CD4-positive, alpha-beta memory T cell (primary cell): ENCODE measurements at regions of chr1 and their contacts with region 1.

Region 1: GRCh38 chr1:26417111-26417759 is 6.6 kb downstream of the LIN28A start:
- DNase-seq: peak; percentile 76 to 81 (median 78)
- H3K4me3 ChIP-seq: no peak overlapping the region
- H3K4me3 Mint-ChIP-seq: no peak overlapping the region
- H3K27ac ChIP-seq: no peak overlapping the region
- H3K27ac Mint-ChIP-seq: no peak overlapping the region
- H3K4me1 ChIP-seq: no peaks in the 10 kb centered on the region
- H3K4me1 Mint-ChIP-seq: peaks cover 0 to 3% (median 0%) of the 10 kb centered on the region in 4 donors
- H3K27me3 ChIP-seq: peaks cover 19% of the 10 kb centered on the region
- H3K27me3 Mint-ChIP-seq: peaks cover 12 to 23% of the 10 kb centered on the region in 2 donors

Region 2: DNA sequence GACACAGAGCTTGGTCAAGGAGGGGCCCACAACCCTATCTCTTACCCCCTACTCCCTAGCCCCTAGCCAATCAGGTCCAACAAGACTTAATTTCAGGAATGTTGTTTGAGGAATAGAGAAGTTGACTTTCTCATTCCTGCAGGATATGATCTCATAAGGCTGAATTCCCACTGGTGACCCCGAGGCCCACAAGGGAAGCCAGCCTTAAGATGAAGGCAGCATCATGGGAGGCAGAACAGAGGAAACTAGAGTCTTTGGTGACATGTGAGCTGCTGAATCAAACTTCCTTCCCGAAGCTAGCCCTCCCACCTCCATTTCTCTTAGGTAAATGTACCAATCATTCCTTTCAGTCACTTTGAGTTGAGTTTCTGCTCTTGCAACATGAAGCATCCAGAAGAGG is 314.7 kb before region 1 on chr1:
- CTCF ChIA-PET with region 1: interaction called, 8 read pairs
- POLR2A ChIA-PET with region 1: no interaction called
- intact Hi-C with region 1: loop called (anchors 2 kb)
- DNase-seq: no peak
- H3K4me3 ChIP-seq: no peak overlapping the region
- H3K4me3 Mint-ChIP-seq: no peak overlapping the region
- H3K27ac ChIP-seq: no peak overlapping the region
- H3K27ac Mint-ChIP-seq: peak overlapping the region in 1 of 7 donors; percentile 17
- H3K4me1 ChIP-seq: no peaks in the 10 kb centered on the region
- H3K4me1 Mint-ChIP-seq: peaks cover 3 to 5% (median 4%) of the 10 kb centered on the region in 4 donors
- H3K27me3 ChIP-seq: no peaks in the 10 kb centered on the region
- H3K27me3 Mint-ChIP-seq: peaks cover 1 to 2% of the 10 kb centered on the region in 2 donors

Region 3: DNA sequence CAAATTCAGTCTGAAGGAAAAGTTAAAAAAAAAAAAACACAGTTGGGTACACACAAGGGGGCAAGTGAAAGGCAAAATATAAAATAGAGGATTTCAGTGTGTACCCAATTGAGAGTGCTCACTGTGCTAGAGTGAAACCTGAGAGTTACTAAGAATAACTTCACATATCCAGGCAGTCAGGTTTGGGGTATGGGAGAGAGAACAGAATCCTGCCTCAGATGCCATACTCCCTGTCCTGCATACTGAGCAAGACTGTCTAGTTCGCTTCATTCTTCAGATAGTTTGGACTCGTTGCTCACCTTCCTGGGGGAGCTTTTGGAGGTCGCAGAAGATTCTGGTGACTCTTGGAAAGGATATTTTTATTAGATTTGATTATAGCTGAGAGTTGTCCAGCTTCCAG is 162.8 kb before region 1 on chr1:
- CTCF ChIA-PET with region 1: interaction called, 16 read pairs
- POLR2A ChIA-PET with region 1: no interaction called
- intact Hi-C with region 1: no loop called
- DNase-seq: no peak
- H3K4me3 ChIP-seq: no peak overlapping the region
- H3K4me3 Mint-ChIP-seq: no peak overlapping the region
- H3K27ac ChIP-seq: no peak overlapping the region
- H3K27ac Mint-ChIP-seq: peak overlapping the region in 2 of 7 donors; percentile 14 to 55
- H3K4me1 ChIP-seq: no peaks in the 10 kb centered on the region
- H3K4me1 Mint-ChIP-seq: peaks cover 0 to 9% (median 2%) of the 10 kb centered on the region in 4 donors
- H3K27me3 ChIP-seq: no peaks in the 10 kb centered on the region
- H3K27me3 Mint-ChIP-seq: no peaks in the 10 kb centered on the region

Region 4: DNA sequence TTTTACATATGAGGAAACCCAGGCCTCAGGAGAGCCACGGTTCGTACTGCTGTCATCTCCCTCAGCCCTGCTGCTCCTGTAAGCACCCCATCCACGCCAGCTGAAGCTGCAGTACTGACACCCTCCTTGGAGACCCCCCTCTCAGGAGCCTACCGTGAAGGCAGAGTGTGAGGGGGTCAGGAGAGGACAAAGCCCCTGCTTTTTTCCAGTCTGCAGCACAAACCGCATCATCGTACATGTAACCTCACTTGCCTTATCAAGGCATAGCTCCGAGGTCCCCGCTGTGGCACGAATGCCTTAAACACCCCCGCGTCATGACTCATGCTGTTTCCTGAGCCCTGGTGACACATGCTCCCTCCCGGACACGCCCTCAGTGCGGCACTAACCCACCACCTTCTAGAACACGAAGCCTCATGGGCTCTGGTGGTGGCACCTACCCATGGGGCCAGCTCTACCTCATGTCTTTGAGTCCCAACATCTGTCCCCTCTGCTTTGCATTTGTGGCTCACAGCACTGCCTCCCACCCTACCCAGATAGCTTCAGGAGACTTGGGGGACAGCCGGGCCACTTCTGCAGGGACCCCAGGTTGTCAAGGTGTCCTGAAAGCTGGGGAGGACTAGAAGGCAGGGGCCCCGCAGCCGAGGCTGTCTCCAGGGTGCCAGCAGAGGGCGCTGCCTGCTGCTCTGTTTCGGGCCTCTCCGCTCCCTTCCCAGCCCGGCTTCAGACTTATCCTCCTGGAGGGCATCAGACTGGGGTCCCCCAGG is 132.5 kb before region 1 on chr1:
- CTCF ChIA-PET with region 1: interaction called, 23 read pairs
- POLR2A ChIA-PET with region 1: interaction called, 8 read pairs
- intact Hi-C with region 1: loop called (anchors 2 kb)
- DNase-seq: peak; percentile 91 to 99 (median 92)
- H3K4me3 ChIP-seq: peak overlapping the region; percentile 38 to 50
- H3K4me3 Mint-ChIP-seq: peak overlapping the region; percentile 82 to 94 (median 89)
- H3K27ac ChIP-seq: peak overlapping the region; percentile 91
- H3K27ac Mint-ChIP-seq: peak overlapping the region; percentile 94 to 100 (median 99)
- H3K4me1 ChIP-seq: peaks cover 95% of the 10 kb centered on the region
- H3K4me1 Mint-ChIP-seq: peaks cover 63 to 96% (median 81%) of the 10 kb centered on the region in 4 donors
- H3K27me3 ChIP-seq: no peaks in the 10 kb centered on the region
- H3K27me3 Mint-ChIP-seq: no peaks in the 10 kb centered on the region

Region 5: GRCh38 chr1:26358411-26359384 is 58.5 kb before region 1 on chr1:
- CTCF ChIA-PET with region 1: interaction called, 57 read pairs
- POLR2A ChIA-PET with region 1: no interaction called
- intact Hi-C with region 1: loop called (anchors 1 kb)
- DNase-seq: peak; percentile 79 to 95 (median 81)
- H3K4me3 ChIP-seq: peak overlapping the region in 1 of 2 donors; percentile 44
- H3K4me3 Mint-ChIP-seq: peak overlapping the region; percentile 58 to 88 (median 74)
- H3K27ac ChIP-seq: peak overlapping the region; percentile 40
- H3K27ac Mint-ChIP-seq: peak overlapping the region; percentile 79 to 97 (median 94)
- H3K4me1 ChIP-seq: peaks cover 56% of the 10 kb centered on the region
- H3K4me1 Mint-ChIP-seq: peaks cover 27 to 70% (median 41%) of the 10 kb centered on the region in 4 donors
- H3K27me3 ChIP-seq: no peaks in the 10 kb centered on the region
- H3K27me3 Mint-ChIP-seq: no peaks in the 10 kb centered on the region

Region 6: GRCh38 chr1:26378088-26378878 is 39.0 kb before region 1 on chr1:
- CTCF ChIA-PET with region 1: interaction called, 21 read pairs
- POLR2A ChIA-PET with region 1: interaction called, 3 read pairs
- intact Hi-C with region 1: no loop called
- DNase-seq: peak; percentile 86 to 95 (median 90)
- H3K4me3 ChIP-seq: peak overlapping the region in 1 of 2 donors; percentile 32
- H3K4me3 Mint-ChIP-seq: peak overlapping the region; percentile 55 to 87 (median 74)
- H3K27ac ChIP-seq: peak overlapping the region; percentile 53
- H3K27ac Mint-ChIP-seq: peak overlapping the region; percentile 84 to 99 (median 96)
- H3K4me1 ChIP-seq: peaks cover 82% of the 10 kb centered on the region
- H3K4me1 Mint-ChIP-seq: peaks cover 53 to 92% (median 69%) of the 10 kb centered on the region in 4 donors
- H3K27me3 ChIP-seq: no peaks in the 10 kb centered on the region
- H3K27me3 Mint-ChIP-seq: no peaks in the 10 kb centered on the region

Region 7: DNA sequence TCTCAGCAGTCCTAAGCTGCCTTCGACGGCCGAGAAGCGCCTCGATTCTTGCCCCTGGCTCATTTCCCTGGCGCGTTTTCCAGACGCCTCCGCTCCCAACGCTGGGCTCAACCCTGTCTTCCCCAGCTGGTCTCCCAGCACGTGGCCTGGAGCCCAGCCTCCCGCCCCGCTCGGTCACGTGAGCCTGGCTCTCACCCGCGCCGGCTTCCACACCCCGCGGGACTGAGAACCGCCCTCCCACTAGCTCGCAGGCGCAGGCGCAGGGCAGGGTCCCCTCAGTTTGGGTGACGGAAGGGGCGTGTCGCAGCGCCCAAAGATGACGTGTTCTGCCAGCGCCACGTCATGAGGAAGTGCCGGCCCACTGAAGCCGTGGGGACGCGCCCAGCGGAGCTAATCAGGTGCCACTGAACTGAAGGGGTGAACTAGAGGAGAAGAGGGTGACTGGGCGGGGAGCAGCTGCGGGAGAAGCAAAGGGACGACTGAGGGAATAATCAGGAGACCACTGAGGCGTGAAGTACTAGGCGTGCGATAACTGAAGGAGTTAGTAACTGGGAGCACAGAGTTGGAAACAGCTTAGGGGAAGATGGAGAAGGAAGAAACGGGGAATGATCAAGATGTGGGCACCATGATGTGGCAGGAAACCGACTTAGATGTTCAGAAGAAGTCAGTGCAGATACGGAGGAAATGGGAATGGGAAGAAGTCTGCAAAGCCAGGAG is 14.9 kb after region 1 on chr1 and contains the start of gene DHDDS:
- CTCF ChIA-PET with region 1: interaction called, 19 read pairs
- POLR2A ChIA-PET with region 1: interaction called, 3 read pairs
- intact Hi-C with region 1: no loop called
- DNase-seq: peak; percentile 97 to 99 (median 97)
- H3K4me3 ChIP-seq: peak within 1 kb of the TSS; percentile 85 to 88
- H3K4me3 Mint-ChIP-seq: peak within 1 kb of the TSS; percentile 89 to 98 (median 94)
- H3K27ac ChIP-seq: peak within 1 kb of the TSS; percentile 69
- H3K27ac Mint-ChIP-seq: peak within 1 kb of the TSS; percentile 71 to 98 (median 97)
- H3K4me1 ChIP-seq: peaks cover 28% of the 10 kb centered on the region
- H3K4me1 Mint-ChIP-seq: peaks cover 10 to 25% (median 17%) of the 10 kb centered on the region in 4 donors
- H3K27me3 ChIP-seq: no peaks in the 10 kb centered on the region
- H3K27me3 Mint-ChIP-seq: peaks cover 2 to 4% of the 10 kb centered on the region in 2 donors
- total RNA-seq, gene DHDDS: 44.4 to 46.2 TPM

Region 8: GRCh38 chr1:26618561-26618960 is 201.3 kb after region 1 on chr1:
- CTCF ChIA-PET with region 1: no interaction called
- POLR2A ChIA-PET with region 1: no interaction called
- intact Hi-C with region 1: no loop called
- DNase-seq: no peak
- H3K4me3 ChIP-seq: no peak overlapping the region
- H3K4me3 Mint-ChIP-seq: peak overlapping the region in 2 of 8 donors; percentile 36 to 43
- H3K27ac ChIP-seq: no peak overlapping the region
- H3K27ac Mint-ChIP-seq: peak overlapping the region in 3 of 7 donors; percentile 6 to 65 (median 55)
- H3K4me1 ChIP-seq: peaks cover 19% of the 10 kb centered on the region
- H3K4me1 Mint-ChIP-seq: peaks cover 13 to 22% (median 18%) of the 10 kb centered on the region in 4 donors
- H3K27me3 ChIP-seq: no peaks in the 10 kb centered on the region
- H3K27me3 Mint-ChIP-seq: no peaks in the 10 kb centered on the region